ENCODE measurements at regions of chr9 and their contacts with region 1.

Region 1: DNA sequence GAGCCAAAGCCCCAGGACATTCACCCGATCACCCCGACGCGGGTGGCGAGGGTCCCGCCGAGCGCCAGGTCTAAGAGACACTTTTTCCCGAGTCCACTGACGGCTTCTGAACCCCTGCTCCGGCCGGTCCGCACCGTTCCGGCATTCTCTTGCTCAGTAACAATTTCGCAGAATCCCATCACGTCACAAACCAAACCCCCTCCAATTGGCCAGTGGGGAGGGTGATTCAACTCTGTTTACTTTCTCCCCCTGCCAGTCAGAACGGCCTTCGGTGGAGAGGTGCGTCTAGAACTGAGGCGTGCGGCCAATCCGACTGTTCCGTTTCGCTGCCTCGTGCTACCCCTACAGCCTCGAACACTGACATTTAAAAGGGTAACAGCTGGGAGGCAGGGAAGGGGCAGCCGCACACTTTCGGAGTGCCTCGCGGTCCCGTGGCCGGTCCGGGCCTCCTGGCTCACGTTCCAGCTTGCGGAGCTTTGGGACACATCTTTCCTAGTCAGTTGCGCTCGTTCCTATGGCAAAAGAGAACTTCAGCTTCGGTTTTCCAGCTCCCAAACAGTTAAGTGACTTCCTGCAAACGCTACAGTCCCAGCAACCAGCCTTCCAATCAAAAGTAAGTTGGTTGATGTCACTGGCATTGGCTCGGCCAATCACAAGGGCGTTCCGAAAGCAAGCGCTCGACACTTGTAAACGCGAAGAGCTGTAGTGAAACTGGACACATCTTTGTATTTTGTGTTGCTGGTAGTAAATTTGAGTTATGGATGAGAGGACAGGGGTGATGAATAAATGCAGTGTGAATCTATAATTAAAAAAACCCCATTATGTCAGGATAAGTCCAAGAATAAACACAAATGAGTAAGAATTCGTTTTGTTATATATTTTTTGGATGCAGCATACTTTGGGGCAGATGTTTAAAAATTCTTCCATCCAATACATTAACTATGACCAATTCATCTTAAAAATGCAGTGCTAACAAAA is at the start of gene KLF9:
- DNase-seq: peak; percentile 97
- ATAC-seq: peak; percentile 76
- H3K4me3 Mint-ChIP-seq: peak within 1 kb of the TSS; percentile 98
- H3K27ac Mint-ChIP-seq: peak within 1 kb of the TSS; percentile 100
- H3K4me1 Mint-ChIP-seq: peaks cover 42% of the 10 kb centered on the region
- H3K27me3 Mint-ChIP-seq: no peaks in the 10 kb centered on the region
- CTCF ChIP-seq: no peak
- total RNA-seq, gene KLF9: 19.0 to 20.1 TPM

Region 2: DNA sequence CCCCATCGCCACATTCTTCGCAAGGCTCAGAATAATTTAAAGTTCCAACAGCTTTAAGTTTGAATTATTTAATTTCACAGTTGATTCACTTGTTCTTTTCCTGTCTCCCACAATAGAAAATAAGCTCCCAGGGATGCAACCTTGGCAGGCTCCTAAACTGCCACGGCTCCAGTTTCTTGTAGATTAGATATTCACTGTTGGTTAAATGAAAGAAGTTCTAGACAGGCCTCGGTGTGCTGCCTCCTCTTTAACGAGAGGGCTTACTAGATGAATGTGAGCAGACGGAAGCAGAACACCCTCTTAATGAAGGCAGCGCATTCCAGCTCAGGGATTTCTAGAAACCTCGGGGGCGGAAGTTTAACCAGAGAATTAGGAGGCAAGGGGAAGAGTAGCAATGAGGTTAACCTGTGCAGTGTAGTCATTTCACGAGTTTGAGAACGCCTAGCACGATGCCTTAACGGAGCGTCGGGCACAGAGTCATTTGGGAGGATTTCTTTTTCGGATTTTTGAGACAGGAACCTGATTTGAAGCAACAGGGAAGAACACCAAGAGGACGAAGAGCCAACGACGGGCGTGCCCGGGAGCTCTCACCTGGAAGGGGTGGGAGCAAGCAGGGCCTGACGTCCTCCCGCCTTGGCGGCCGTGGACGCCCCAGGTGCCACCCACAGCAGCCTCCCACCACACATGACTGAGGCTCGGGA is 155.9 kb before region 1 on chr9:
- CTCF ChIA-PET with region 1: no interaction called
- POLR2A ChIA-PET with region 1: interaction called, 7 read pairs
- intact Hi-C with region 1: loop called (anchors 2 kb)
- DNase-seq: peak; percentile 47
- ATAC-seq: peak; percentile 42
- H3K4me3 Mint-ChIP-seq: peak overlapping the region; percentile 93
- H3K27ac Mint-ChIP-seq: peak overlapping the region; percentile 98
- H3K4me1 Mint-ChIP-seq: peaks cover 50% of the 10 kb centered on the region
- H3K27me3 Mint-ChIP-seq: no peaks in the 10 kb centered on the region
- CTCF ChIP-seq: no peak

Region 3: DNA sequence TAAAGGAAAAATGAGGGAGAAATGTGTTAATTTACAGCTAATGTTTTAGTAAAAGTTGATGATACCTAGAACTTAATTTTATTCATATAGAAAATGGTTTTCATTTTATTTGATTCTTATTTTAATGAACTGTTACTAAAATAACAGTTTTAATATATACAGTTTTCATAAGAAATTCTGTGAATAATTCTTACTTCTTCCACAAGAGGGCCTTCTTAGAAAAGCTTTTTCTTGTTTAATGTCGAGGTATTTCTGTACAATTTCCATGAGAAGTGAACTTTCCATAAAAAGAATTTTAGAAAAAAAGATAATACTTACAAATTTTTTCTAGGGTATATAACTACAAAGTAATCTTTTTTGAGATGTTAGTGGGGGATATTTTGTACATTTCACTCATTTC is 73.5 kb before region 1 on chr9:
- CTCF ChIA-PET with region 1: interaction called, 4 read pairs
- POLR2A ChIA-PET with region 1: interaction called, 4 read pairs
- intact Hi-C with region 1: loop called (anchors 5 kb)
- DNase-seq: no peak
- ATAC-seq: no peak
- H3K4me3 Mint-ChIP-seq: no peak overlapping the region
- H3K27ac Mint-ChIP-seq: no peak overlapping the region
- H3K4me1 Mint-ChIP-seq: peaks cover 2% of the 10 kb centered on the region
- H3K27me3 Mint-ChIP-seq: no peaks in the 10 kb centered on the region
- CTCF ChIP-seq: peak; percentile 69

Region 4: GRCh38 chr9:70466976-70467561 is 53.0 kb after region 1 on chr9:
- CTCF ChIA-PET with region 1: no interaction called
- POLR2A ChIA-PET with region 1: interaction called, 4 read pairs
- intact Hi-C with region 1: loop called (anchors 5 kb)
- DNase-seq: peak; percentile 42
- ATAC-seq: peak; percentile 85
- H3K4me3 Mint-ChIP-seq: no peak overlapping the region
- H3K27ac Mint-ChIP-seq: peak overlapping the region; percentile 12
- H3K4me1 Mint-ChIP-seq: peaks cover 47% of the 10 kb centered on the region
- H3K27me3 Mint-ChIP-seq: no peaks in the 10 kb centered on the region
- CTCF ChIP-seq: no peak

Region 5: GRCh38 chr9:70563431-70564204 is 149.5 kb after region 1 on chr9:
- CTCF ChIA-PET with region 1: interaction called, 4 read pairs
- POLR2A ChIA-PET with region 1: interaction called, 22 read pairs
- intact Hi-C with region 1: no loop called
- DNase-seq: peak; percentile 78
- ATAC-seq: peak; percentile 87
- H3K4me3 Mint-ChIP-seq: peak overlapping the region; percentile 63
- H3K27ac Mint-ChIP-seq: peak overlapping the region; percentile 96
- H3K4me1 Mint-ChIP-seq: peaks cover 46% of the 10 kb centered on the region
- H3K27me3 Mint-ChIP-seq: no peaks in the 10 kb centered on the region
- CTCF ChIP-seq: no peak

Region 6: GRCh38 chr9:71768388-71769174 is 1354.5 kb after region 1 on chr9 and contains the start of gene CEMIP2:
- CTCF ChIA-PET with region 1: no interaction called
- POLR2A ChIA-PET with region 1: no interaction called
- intact Hi-C with region 1: loop called (anchors 10 kb)
- DNase-seq: peak; percentile 91
- ATAC-seq: peak; percentile 78
- H3K4me3 Mint-ChIP-seq: peak within 1 kb of the TSS; percentile 98
- H3K27ac Mint-ChIP-seq: peak within 1 kb of the TSS; percentile 96
- H3K4me1 Mint-ChIP-seq: peaks cover 34% of the 10 kb centered on the region
- H3K27me3 Mint-ChIP-seq: no peaks in the 10 kb centered on the region
- CTCF ChIP-seq: no peak
- total RNA-seq, gene CEMIP2: 58.7 to 63.5 TPM